Motor neuron (in vitro differentiated cells): ENCODE measurements at regions of chr16 and their contacts with region 1.

Region 1: DNA sequence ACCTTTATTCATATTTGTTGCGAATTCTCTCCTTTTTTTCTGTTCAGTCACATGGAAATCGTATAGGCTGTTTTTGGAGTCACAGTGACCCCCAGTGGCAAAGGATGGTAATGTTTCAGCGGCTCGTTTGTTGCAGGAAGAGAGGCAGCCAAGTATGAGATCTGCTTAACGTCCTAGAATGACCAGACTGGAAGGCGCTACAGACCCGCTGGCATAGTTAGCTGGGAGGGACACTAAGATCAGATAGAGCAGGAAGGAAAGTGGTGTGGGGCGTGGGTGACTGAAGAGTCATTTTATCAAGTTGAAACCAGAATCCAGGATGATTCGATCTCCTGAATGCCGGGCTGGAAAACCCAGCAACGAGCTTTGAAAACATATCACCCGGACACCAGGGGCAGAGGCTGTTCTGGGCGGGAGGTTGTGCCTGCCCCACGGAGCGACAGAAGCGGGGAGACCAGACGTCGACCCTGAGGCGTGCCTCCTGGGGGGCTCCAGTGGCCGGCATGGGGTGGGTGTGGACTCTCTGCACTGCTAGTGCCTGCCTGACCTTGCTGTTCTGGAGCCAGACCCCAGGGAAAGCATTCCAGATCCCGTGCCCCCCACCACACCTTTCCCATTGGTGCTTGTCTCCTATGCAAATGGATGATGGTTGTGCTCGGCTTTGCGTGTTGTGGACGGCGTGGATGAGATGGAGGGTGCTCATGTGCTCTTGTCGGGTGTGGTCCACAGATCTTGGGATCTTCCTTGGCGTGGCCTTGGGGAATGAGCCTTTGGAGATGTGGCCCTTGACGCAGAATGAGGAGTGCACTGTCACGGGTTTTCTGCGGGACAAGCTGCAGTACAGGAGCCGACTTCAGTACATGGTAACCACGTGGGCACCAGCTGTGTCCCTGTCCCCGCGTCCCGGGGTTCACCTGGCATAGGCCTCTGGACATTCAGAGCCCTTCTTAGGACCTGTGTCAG is 7.7 kb downstream of the IL34 start:
- ATAC-seq: peak; percentile 69 to 85 (median 81)
- H3K4me3 ChIP-seq: no peak overlapping the region
- H3K27ac ChIP-seq: no peak overlapping the region
- H3K4me1 ChIP-seq: no peaks in the 10 kb centered on the region

Region 2: GRCh38 chr16:69680358-69680757 is 973.7 kb before region 1 on chr16:
- in situ Hi-C with region 1: no loop called
- ATAC-seq: no peak
- H3K4me3 ChIP-seq: no peak overlapping the region
- H3K27ac ChIP-seq: no peak overlapping the region
- H3K4me1 ChIP-seq: no peaks in the 10 kb centered on the region

Region 3: DNA sequence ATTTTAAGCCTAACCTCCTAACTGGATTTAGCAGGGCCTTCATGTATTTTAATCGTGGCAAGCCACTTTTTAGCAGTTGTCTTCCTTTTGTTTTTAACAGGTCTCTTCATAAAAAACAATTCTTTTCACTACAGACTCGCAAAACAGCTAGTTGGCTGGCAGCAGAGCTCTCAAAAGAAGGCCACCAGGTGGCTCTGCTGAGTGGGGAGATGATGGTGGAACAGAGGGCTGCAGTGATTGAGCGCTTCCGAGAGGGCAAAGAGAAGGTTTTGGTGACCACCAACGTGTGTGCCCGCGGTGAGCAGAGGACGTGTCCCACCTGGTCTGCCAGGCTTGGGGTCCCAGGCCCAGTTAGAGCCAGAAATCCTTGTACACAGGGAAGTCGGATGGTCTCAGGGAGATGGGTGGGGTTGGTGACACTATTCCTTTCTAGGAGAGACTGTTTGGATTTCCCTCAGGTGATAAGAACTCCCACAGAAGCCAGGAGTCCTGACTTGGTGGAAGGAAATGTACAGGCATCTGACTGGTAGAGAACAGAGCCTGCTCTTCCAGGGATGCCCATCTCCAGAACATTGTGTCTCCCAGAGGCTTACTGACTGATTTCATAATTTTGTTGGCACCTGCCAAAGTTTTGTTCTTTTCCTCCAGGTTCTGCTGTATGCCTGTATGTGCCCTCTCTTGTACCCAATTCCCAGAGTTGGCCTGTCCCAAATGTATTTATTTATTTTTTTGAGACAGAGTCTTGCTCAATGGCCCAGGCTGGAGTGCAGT is 322.3 kb before region 1 on chr16:
- in situ Hi-C with region 1: loop called in 1 of 9 experiments (anchors 25 kb)
- ATAC-seq: peak in 6 of 8 experiments; percentile 35 to 87 (median 65)
- H3K4me3 ChIP-seq: no peak overlapping the region
- H3K27ac ChIP-seq: no peak overlapping the region
- H3K4me1 ChIP-seq: no peaks in the 10 kb centered on the region

Region 4: DNA sequence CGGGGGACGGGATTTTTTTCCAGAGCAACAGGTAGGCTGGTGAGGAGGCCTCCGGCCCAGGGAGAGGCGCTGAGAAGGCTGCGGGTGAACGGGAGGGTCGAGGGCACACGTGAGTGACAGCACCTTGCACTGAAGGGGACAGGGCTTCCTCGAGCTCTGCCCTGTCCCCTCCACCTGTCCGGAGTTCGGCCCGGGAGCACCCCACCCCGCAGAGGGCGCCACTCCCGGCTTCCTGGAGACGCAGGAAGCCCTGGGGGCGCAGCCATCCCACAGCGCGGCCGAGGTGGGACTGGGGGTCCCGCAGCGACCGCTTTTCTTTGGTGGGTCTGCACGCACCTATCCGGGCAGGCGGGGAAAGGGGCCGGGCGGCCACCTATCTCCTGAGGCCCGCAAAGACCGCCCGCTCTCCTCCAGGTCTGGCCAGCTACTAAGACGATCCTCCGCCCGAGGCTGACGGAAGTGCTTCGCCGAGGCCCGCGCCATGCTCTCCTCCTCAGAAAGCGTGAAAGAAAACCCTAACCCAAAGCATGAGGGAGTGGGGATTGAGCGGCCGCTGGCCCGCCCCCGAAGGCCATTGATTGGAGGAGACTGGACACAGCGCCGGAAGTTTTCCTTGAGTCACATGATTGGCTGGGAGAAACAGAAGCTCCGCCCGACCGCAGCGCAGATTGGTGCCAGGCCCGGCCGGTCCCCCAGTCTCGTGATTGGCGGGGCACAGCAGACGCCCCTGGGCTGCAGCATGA is 273.1 kb before region 1 on chr16:
- in situ Hi-C with region 1: loop called in 1 of 9 experiments (anchors 25 kb)
- ATAC-seq: peak; percentile 83 to 96 (median 93)
- H3K4me3 ChIP-seq: peak overlapping the region; percentile 46 to 75 (median 56)
- H3K27ac ChIP-seq: peak overlapping the region; percentile 31 to 86
- H3K4me1 ChIP-seq: peaks cover 8 to 13% of the 10 kb centered on the region in 2 donors